HEK293 (cell line): ENCODE measurements at regions of chr12 and their contacts with region 1.

Region 1: DNA sequence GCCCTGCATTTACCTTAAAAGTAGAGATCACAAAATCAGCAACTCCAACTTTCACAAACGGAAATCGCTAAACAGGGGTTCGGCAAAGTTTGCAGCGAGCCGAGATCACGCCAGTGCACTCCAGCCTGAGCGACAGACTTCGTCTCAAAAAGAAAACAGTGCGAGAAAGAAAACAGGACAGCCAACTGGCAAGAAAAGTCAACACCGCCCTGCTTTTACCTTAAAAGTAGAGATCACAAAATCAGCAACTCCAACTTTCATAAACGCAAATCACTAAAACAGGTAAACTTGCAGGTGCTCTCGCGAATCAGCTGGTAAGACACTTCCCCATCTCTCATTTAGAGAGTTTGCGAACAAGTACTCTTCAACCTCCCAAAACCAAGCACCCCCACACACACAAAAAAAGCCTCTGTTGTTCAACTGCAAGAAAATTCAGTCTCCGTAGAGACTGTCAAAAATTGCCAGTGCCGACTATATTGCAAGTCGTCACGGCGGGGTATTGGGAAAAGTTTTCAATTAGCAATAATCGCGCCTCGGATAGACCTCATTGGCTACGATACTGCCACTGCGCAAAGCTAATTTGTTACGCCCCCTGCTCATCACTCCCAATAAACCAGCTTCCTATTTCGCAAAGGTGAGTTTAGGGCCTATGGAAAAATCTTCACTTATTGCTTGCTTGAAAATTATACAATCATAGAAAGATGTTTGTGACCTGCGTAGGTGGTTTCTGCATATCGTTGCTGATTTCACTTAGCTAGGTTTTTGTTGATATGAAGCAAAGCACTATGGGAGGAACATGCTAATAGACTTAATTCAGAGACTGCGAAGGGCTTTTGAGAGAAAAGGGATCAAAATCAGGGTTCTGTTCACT is at the start of gene RNU4-1:
- H3K4me3 ChIP-seq: peak within 1 kb of the TSS; percentile 63
- H3K27ac ChIP-seq: peak within 1 kb of the TSS; percentile 100
- H3K4me1 ChIP-seq: no peaks in the 10 kb centered on the region
- CTCF ChIP-seq: no peak

Region 2: GRCh38 chr12:119988782-119989668 is 303.9 kb before region 1 on chr12 and contains the start of gene BICDL1:
- CTCF ChIA-PET with region 1: no interaction called
- POLR2A ChIA-PET with region 1: interaction called, 12 read pairs
- H3K4me3 ChIP-seq: peak within 1 kb of the TSS; percentile 62
- H3K27ac ChIP-seq: peak within 1 kb of the TSS; percentile 50; the same call in 1 of the 2 replicates
- H3K4me1 ChIP-seq: no peaks in the 10 kb centered on the region
- CTCF ChIP-seq: 0 out of 2 replicates have a peak, but pooled peaks have one; percentile 2

Region 3: GRCh38 chr12:120228291-120229070 is 64.4 kb before region 1 on chr12:
- CTCF ChIA-PET with region 1: interaction called, 67 read pairs
- POLR2A ChIA-PET with region 1: interaction called, 194 read pairs
- H3K4me3 ChIP-seq: no peak overlapping the region
- H3K27ac ChIP-seq: peak overlapping the region; percentile 4; the same call in 1 of the 2 replicates
- H3K4me1 ChIP-seq: peaks cover 42% of the 10 kb centered on the region
- CTCF ChIP-seq: peak; percentile 94

Region 4: DNA sequence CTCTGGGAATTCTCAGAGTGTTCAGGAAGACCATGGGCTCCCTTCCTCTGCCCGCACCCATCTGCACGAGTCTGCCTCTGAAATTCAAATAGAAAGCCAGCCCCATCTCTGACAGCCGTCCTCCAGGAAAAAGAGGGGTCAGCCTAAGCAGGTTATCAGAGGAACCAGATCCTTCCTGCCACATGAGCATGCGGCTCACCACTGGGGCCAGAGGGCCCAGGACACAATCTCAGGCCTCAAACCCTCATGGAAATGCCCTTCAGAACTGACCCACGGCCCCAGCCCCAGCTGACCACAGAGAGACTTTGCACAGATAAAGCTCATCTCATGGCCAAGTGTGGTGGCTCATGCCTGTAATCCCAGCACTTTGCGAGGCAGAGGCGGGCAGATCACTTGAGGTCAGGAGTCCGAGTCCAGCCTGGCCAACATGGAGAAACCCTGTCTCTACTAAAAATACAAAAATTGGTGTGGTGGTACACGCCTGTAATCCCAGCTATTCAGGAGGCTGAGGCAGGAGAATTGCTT is 50.6 kb before region 1 on chr12:
- CTCF ChIA-PET with region 1: no interaction called
- POLR2A ChIA-PET with region 1: interaction called, 11 read pairs
- H3K4me3 ChIP-seq: no peak overlapping the region
- H3K27ac ChIP-seq: no peak overlapping the region
- H3K4me1 ChIP-seq: no peaks in the 10 kb centered on the region
- CTCF ChIP-seq: no peak

Region 5: GRCh38 chr12:120265473-120266179 is 27.3 kb before region 1 on chr12 and contains the start of gene PXN:
- CTCF ChIA-PET with region 1: interaction called, 6 read pairs
- POLR2A ChIA-PET with region 1: interaction called, 23 read pairs
- H3K4me3 ChIP-seq: peak within 1 kb of the TSS; percentile 90
- H3K27ac ChIP-seq: peak within 1 kb of the TSS; percentile 65; the same call in 1 of the 2 replicates
- H3K4me1 ChIP-seq: peaks cover 4% of the 10 kb centered on the region; the same call in 1 of the 2 replicates
- CTCF ChIP-seq: peak; percentile 69

Region 6: GRCh38 chr12:120317224-120318105 is 24.6 kb after region 1 on chr12:
- CTCF ChIA-PET with region 1: interaction called, 3 read pairs
- POLR2A ChIA-PET with region 1: interaction called, 11 read pairs
- H3K4me3 ChIP-seq: peak overlapping the region; percentile 44
- H3K27ac ChIP-seq: peak overlapping the region; percentile 6; the same call in 1 of the 2 replicates
- H3K4me1 ChIP-seq: 0 out of 2 replicates have a peak, but pooled peaks cover 4% of the 10 kb centered on the region
- CTCF ChIP-seq: peak; percentile 99

Region 7: DNA sequence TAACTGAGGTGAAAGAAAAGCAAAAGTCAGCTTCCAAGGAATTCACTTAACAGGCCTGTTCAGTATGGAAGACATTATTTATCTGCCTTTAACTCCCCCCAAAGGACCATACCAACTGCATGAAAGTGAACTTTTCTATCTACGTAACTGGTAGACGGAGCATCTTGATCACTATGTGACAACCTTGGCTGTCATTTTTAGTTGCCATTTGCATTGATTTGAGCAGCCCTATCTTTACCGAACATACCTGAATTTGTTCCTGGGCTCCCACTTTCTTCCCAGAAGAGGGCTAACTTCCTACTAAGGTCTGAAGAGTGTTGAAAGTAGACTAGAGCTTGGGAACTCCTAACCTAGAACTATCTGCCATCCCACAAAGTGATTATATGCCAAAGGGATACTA is 167.3 kb after region 1 on chr12:
- CTCF ChIA-PET with region 1: no interaction called
- POLR2A ChIA-PET with region 1: no interaction called
- H3K4me3 ChIP-seq: no peak overlapping the region
- H3K27ac ChIP-seq: peak overlapping the region; percentile 31; the same call in 1 of the 2 replicates
- H3K4me1 ChIP-seq: no peaks in the 10 kb centered on the region
- CTCF ChIP-seq: no peak

Region 8: GRCh38 chr12:122078141-122079032 is 1785.5 kb after region 1 on chr12 and contains the start of gene MLXIP:
- CTCF ChIA-PET with region 1: no interaction called
- POLR2A ChIA-PET with region 1: interaction called, 12 read pairs
- H3K4me3 ChIP-seq: peak within 1 kb of the TSS; percentile 74
- H3K27ac ChIP-seq: peak within 1 kb of the TSS; percentile 85; the same call in 1 of the 2 replicates
- H3K4me1 ChIP-seq: peaks cover 16% of the 10 kb centered on the region
- CTCF ChIP-seq: no peak